Posterior cingulate gyrus (tissue), 11 donors: ENCODE measurements at regions of chr6 and their contacts with region 1.

Region 1: DNA sequence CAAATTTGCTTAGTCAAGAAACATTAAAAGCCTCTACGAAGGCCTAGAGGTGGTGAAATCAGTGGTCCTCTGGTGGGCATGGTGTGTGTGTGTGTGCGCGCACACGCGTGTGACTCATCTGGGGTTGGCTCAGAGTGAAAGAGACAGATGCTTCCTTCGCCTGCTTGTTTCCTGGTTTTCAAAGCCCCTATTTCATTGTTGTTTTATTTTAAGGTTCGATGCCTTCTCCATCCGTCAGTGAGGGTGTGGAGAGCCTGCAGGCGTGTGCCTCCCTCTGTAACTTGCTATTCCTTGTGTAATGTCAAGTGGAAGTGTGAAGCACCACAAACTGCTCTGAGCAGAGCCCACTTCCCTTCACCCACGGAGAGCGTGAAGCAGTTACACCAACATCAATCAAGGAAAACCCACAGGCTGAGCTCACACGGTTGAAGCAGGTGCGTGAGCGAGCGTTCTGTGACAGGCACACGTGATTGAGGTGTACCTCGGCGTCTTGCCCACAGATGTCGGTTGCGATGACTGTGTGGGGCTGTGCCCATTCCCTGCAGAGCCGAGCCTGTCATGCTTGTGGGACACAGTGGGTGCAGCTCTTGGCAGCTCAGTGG is 233.9 kb downstream of the PRL start:
- DNase-seq: peak in 7 of 10 donors; percentile 6 to 59 (median 28)

Region 2: GRCh38 chr6:20919677-20920385 is 1143.1 kb before region 1 on chr6:
- intact Hi-C with region 1: no loop called
- DNase-seq: no peak

Region 3: GRCh38 chr6:22025468-22026160 is 37.3 kb before region 1 on chr6:
- intact Hi-C with region 1: loop called (anchors 2 kb)
- DNase-seq: no peak